ENCODE measurements at regions of chr17 and their contacts with region 1.

Region 1: GRCh38 chr17:49575579-49576087 is at the start of gene NXPH3:
- DNase-seq: peak in 1 of 2 donors; percentile 54
- ATAC-seq: peak; percentile 76
- H3K4me3 ChIP-seq: peak within 1 kb of the TSS; percentile 66 to 76 (median 70)
- H3K27ac ChIP-seq: peak within 1 kb of the TSS; percentile 58 to 69 (median 65)
- H3K4me1 ChIP-seq: peaks cover 11 to 19% of the 10 kb centered on the region in 2 donors
- H3K27me3 ChIP-seq: peaks cover 0 to 4% (median 0%) of the 10 kb centered on the region in 3 donors
- CTCF ChIP-seq: peak in 4 of 5 experiments; percentile 86 to 96 (median 93)
- POLR2A ChIP-seq: no peak
- total RNA-seq, gene NXPH3: 1.3 to 3.0 (median 1.7) TPM

Region 2: DNA sequence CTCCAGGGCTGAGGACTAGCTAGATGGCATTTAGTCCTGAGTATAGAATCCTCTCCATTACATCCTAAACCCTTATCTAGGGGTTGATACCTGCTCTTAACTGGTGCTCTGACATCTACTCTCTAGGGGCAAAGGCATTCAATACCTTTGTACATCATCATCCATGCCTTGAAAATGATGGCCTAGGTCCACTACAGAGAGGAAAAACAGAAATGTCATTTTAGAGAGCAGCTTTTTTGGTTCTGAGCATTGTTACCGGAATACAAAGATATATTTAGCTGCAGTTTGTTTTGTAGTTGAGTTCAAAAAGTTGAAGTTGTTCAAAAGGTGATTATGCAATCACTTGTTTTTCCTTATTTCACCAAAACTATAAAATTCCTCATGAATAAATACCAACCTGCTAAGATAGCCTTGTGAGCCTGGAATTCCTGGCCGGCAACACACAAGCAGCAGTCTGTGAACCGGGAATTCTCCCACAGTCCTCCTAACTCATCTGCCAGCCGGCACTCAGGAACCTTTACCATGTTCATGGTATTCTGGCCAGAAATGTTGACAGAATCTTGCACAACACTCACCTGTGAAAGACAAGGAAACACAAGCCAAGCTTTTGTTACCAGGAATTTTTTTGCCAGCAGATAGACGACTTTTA is 35.4 kb after region 1 on chr17:
- in situ Hi-C with region 1: no loop called
- intact Hi-C with region 1: loop called (anchors 5 kb)
- DNase-seq: no peak
- ATAC-seq: no peak
- H3K4me3 ChIP-seq: no peak overlapping the region
- H3K27ac ChIP-seq: peak overlapping the region; percentile 3 to 58 (median 20)
- H3K4me1 ChIP-seq: peaks cover 31 to 39% of the 10 kb centered on the region in 2 donors
- H3K27me3 ChIP-seq: no peaks in the 10 kb centered on the region
- CTCF ChIP-seq: no peak
- POLR2A ChIP-seq: no peak

Region 3: GRCh38 chr17:49694847-49695683 is 119.4 kb after region 1 on chr17:
- in situ Hi-C with region 1: loop called (anchors 5 kb)
- intact Hi-C with region 1: no loop called
- DNase-seq: peak in 1 of 2 donors; percentile 36
- ATAC-seq: no peak
- H3K4me3 ChIP-seq: no peak overlapping the region
- H3K27ac ChIP-seq: no peak overlapping the region
- H3K4me1 ChIP-seq: peaks cover 15 to 18% of the 10 kb centered on the region in 2 donors
- H3K27me3 ChIP-seq: no peaks in the 10 kb centered on the region
- CTCF ChIP-seq: peak; percentile 94 to 97 (median 96)
- POLR2A ChIP-seq: no peak

Region 4: DNA sequence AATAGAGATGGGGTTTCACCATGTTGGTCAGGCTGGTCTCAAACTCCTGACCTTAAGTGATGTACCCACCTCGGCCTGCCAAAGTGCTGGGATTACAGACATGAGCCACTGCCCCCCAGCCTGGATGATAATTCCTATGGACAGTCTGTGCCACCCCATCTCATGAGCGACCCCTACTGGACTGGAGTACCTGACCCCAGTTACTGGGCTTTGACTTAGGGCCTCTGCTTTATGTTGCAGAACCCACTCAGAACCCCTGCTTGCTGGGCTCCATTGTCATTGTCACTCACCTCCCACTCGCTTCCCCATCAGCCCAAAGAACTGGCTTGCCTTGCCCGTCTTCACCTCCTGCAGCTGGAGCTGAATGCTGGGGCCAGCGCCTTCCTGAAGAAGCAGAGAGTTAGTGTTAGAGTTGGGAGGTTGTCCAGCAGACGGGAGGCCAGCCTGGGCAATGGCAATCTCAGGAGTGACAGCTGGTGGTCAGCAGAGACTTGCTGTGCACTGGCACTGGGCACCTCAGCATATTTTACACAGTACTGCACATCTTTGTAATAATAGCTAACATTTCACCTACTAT is 268.2 kb after region 1 on chr17:
- in situ Hi-C with region 1: loop called in 1 of 4 experiments (anchors 10 kb)
- intact Hi-C with region 1: no loop called
- DNase-seq: no peak
- ATAC-seq: no peak
- H3K4me3 ChIP-seq: no peak overlapping the region
- H3K27ac ChIP-seq: no peak overlapping the region
- H3K4me1 ChIP-seq: peaks cover 19 to 21% of the 10 kb centered on the region in 2 donors
- H3K27me3 ChIP-seq: no peaks in the 10 kb centered on the region
- CTCF ChIP-seq: peak in 1 of 5 experiments; percentile 27
- POLR2A ChIP-seq: no peak

Region 5: DNA sequence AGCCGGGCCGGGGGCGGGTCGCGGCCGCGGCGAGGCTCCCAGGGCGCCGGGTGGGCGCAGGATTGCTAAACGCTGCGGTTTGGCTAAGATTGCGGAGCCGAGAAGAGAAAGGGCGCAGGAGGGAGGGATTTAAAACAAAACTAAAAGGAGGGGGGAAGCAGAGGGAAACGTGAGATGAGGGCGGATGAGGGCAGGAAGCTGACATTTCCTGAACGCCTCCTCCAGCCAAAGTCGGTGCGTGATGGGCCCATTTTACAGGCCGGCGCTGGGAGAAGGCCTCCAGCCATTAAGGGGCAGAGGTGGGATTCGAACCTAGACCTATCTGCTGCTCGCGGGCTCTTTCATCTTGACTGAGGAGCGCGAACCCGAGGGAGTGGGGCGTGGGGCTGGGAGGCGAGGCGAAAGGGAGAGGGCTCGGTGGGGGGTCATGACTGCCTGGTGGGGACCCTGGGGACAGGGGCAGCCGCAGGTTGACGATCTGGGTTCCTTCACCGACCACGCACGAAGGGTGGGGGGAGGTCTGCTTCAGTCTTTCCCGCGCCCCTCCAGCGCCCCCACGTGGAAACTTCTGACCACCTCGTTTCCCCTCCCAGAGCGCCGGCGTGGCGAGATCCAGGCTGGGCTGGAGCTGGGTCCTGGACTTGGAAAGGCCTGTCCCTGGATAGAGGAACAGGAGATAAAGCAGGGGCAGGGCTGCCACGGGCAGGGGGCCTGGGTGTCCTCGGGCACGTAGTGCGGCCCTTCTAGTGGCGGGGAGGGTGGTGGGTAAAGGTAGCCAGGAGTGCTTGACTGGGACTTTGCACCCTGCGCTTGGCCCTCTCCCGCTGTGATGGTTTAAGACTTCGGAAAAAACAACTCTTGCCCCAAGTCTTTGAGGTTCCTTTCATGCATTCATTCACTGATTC is 276.0 kb after region 1 on chr17:
- in situ Hi-C with region 1: loop called in 2 of 4 experiments (anchors 10 kb)
- intact Hi-C with region 1: no loop called
- DNase-seq: peak; percentile 36 to 55
- ATAC-seq: peak; percentile 52 to 63
- H3K4me3 ChIP-seq: peak overlapping the region; percentile 50 to 58 (median 57)
- H3K27ac ChIP-seq: peak overlapping the region in 3 of 4 donors; percentile 5 to 33 (median 28)
- H3K4me1 ChIP-seq: peaks cover 12% of the 10 kb centered on the region in 2 donors
- H3K27me3 ChIP-seq: no peaks in the 10 kb centered on the region
- CTCF ChIP-seq: peak; percentile 45 to 74 (median 59)
- POLR2A ChIP-seq: no peak

Region 6: DNA sequence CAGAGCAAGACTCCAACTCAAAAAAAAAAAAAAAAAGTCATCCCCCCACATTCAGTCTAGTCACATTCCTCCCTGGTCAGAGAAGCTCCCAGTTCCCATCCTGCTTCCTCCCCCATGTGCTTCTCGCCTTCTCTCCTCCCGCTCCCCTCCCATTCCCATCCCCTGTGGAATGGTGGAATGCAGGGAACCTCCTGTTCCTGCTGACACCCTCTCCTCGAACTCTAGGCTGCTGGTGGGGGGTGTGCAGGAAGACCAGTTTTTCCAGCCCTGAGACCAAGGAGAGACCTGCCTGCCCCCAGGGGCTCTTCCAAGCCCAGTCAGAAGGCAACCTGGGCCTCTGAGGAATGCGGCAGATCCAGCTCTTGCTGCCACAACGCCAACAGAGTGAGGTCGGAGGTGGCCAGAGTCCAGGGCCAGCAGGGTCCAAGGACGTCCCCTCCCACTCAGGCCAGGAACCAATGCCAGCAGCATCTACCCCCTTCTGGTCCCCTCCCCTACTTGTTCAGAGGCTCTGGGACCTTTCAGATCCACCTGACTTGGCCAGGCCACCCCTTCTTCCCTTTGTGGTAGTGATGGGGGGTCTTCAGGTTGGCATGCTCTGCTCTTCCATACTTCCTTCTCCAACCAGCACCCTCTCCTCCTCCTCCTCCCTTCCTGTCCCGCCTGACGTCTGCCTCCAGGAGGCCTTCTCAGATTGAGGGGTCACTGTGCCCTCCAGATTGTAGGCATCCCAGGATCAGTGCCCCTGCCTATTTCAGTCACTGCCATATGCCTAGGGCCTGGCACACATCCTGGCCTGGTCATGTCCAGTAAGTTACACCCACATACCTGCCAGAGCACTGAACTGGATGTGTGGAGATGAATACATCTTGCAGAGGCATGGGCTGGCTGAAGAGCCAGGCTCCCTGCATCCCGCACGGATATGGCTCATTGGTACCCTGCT is 311.7 kb after region 1 on chr17:
- in situ Hi-C with region 1: no loop called
- intact Hi-C with region 1: no loop called
- DNase-seq: no peak
- ATAC-seq: no peak
- H3K4me3 ChIP-seq: no peak overlapping the region
- H3K27ac ChIP-seq: no peak overlapping the region
- H3K4me1 ChIP-seq: no peaks in the 10 kb centered on the region
- H3K27me3 ChIP-seq: peaks cover 18 to 36% (median 32%) of the 10 kb centered on the region in 3 donors
- CTCF ChIP-seq: no peak
- POLR2A ChIP-seq: no peak